ENCODE measurements at regions of chr2 and their contacts with region 1.

Region 1: DNA sequence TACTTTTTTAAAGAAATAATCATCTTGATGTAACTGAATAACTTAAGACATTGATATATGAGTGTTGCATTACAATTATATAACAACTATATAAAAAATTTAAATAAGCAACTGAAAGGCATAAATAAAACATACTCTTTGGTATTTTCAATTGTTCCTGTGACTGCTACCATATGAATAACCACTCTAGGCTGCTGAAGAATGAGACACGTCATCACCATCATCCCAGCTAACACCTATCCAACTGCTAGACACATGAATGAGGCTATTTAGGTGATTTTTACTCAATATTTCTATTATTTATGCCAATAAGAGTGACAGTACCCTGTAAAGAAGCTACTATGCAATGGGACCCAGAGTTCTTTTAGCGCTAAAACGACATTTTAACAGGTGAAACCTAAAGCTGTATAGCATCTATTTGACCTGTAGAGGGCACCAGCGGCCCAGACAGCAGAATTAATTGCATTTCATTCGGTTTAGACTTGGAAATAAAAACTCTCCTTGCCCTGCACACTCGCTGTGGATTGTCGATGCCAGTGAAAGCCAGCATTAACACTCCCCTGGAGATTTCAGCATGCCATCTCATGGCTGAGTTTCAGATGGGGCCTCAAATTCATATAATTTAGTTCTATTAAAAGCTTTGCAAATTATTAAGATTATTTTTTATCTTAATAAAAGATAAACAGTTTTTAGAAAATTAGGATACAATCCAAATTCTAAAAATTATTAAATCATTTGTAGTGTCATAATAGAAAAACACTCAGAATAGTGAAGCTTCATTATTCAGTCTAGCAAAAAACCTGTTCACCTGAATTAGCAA is 89.4 kb upstream of the MAP2 start:
- DNase-seq: peak; percentile 70
- H3K4me3 Mint-ChIP-seq: no peak overlapping the region
- H3K27ac Mint-ChIP-seq: no peak overlapping the region
- H3K4me1 Mint-ChIP-seq: no peaks in the 10 kb centered on the region
- H3K27me3 Mint-ChIP-seq: no peaks in the 10 kb centered on the region
- CTCF ChIP-seq: peak; percentile 82

Region 2: GRCh38 chr2:208254871-208255556 is 1079.4 kb before region 1 on chr2 and contains the start of gene IDH1:
- CTCF ChIA-PET with region 1: no interaction called
- intact Hi-C with region 1: loop called (anchors 5 kb)
- DNase-seq: peak; percentile 99
- H3K4me3 Mint-ChIP-seq: peak within 1 kb of the TSS; percentile 100
- H3K27ac Mint-ChIP-seq: peak within 1 kb of the TSS; percentile 91
- H3K4me1 Mint-ChIP-seq: peaks cover 27% of the 10 kb centered on the region
- H3K27me3 Mint-ChIP-seq: no peaks in the 10 kb centered on the region
- CTCF ChIP-seq: peak; percentile 68
- total RNA-seq, gene IDH1: 166 TPM in 2 replicates

Region 3: DNA sequence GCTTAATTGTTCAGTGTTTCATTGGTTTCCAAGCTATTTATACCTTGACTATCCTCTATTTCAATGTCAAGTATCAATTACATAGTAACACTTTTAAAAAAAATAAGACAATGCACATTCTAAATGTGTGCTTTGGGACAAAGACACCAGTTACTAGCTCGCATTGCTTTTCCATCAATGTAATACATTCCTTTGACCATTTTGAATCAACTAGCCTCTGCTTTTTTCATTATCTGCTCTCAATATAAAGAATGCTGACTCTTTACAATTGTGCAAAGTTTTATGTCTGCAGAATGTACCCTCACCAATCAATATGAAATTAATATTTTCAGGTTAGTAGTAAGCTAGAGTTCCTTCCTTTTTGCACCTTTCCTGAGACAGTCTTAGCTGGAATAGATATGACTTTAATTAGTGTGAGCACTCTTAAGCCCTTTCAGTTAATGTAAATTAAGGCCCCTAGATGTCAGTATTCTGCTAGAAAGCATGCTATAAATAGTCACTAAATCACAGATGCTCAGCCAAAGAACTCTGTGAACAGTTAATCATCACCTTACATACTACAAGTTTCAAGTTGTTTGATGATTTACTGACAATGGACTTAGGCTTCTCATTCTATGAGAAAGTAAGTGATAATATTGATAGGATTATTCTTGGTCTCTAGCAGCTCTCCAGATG is 514.3 kb before region 1 on chr2:
- CTCF ChIA-PET with region 1: interaction called, 4 read pairs
- intact Hi-C with region 1: loop called (anchors 2 kb)
- DNase-seq: no peak
- H3K4me3 Mint-ChIP-seq: no peak overlapping the region
- H3K27ac Mint-ChIP-seq: no peak overlapping the region
- H3K4me1 Mint-ChIP-seq: peaks cover 8% of the 10 kb centered on the region
- H3K27me3 Mint-ChIP-seq: no peaks in the 10 kb centered on the region
- CTCF ChIP-seq: peak; percentile 28

Region 4: DNA sequence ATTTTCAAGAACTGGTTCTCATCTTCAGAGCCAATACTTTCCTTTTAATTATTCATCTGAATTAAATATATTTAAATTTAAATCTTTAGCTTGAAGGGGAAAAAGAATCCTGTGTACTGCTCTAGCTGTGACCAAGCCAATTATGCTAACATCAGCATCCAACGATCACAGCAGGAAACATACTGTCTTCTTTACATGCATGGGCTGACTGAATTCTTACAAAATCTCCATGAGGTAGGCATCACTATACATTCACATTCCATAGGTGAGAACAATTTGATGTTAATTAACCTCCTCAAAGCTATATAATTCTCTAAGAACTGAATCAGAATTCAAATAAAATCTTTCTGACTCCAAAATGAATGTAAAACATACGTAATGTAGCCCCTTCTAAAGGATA is 29.4 kb before region 1 on chr2:
- CTCF ChIA-PET with region 1: no interaction called
- intact Hi-C with region 1: no loop called
- DNase-seq: no peak
- H3K4me3 Mint-ChIP-seq: no peak overlapping the region
- H3K27ac Mint-ChIP-seq: no peak overlapping the region
- H3K4me1 Mint-ChIP-seq: no peaks in the 10 kb centered on the region
- H3K27me3 Mint-ChIP-seq: no peaks in the 10 kb centered on the region
- CTCF ChIP-seq: no peak

Region 5: DNA sequence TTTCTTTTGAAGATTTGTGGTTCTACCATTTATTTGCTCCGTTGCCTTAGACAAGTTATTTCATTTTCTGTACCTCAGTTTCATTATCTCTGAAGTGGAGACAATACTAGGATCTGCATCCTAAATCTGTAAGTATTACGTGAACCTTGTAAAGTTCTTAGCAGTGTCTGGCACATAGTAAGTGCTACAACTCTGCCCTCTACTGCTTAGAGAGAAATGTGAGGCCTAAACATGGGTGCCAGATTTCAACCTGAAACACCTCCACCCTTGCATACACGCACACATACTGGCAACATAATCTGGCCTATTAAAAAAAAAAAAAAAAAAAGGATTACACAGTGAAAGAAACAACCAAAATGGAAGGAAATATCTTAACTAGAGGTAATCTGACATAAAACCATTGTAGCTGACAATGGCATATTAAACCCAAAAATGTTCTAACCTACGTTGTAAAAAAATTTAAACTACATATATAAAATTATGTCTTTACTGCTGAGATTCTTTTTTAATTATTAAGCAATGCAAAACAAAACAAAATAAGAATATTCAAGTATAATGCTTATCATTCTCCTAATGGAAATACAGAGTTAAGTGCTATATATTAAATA is 222.1 kb after region 1 on chr2:
- CTCF ChIA-PET with region 1: interaction called, 8 read pairs
- intact Hi-C with region 1: loop called (anchors 1 kb)
- DNase-seq: peak; percentile 22
- H3K4me3 Mint-ChIP-seq: no peak overlapping the region
- H3K27ac Mint-ChIP-seq: no peak overlapping the region
- H3K4me1 Mint-ChIP-seq: no peaks in the 10 kb centered on the region
- H3K27me3 Mint-ChIP-seq: no peaks in the 10 kb centered on the region
- CTCF ChIP-seq: peak; percentile 37

Region 6: GRCh38 chr2:209577376-209578357 is 243.3 kb after region 1 on chr2:
- CTCF ChIA-PET with region 1: interaction called, 7 read pairs
- intact Hi-C with region 1: loop called (anchors 1 kb)
- DNase-seq: peak; percentile 20
- H3K4me3 Mint-ChIP-seq: no peak overlapping the region
- H3K27ac Mint-ChIP-seq: no peak overlapping the region
- H3K4me1 Mint-ChIP-seq: no peaks in the 10 kb centered on the region
- H3K27me3 Mint-ChIP-seq: no peaks in the 10 kb centered on the region
- CTCF ChIP-seq: peak; percentile 32

Region 7: GRCh38 chr2:210440206-210440605 is 1105.8 kb after region 1 on chr2:
- CTCF ChIA-PET with region 1: no interaction called
- intact Hi-C with region 1: no loop called
- DNase-seq: no peak
- H3K4me3 Mint-ChIP-seq: no peak overlapping the region
- H3K27ac Mint-ChIP-seq: no peak overlapping the region
- H3K4me1 Mint-ChIP-seq: no peaks in the 10 kb centered on the region
- H3K27me3 Mint-ChIP-seq: no peaks in the 10 kb centered on the region
- CTCF ChIP-seq: no peak

Measured in Calu3 (cell line).